ENCODE measurements at regions of chr2 and their contacts with region 1.

Region 1: DNA sequence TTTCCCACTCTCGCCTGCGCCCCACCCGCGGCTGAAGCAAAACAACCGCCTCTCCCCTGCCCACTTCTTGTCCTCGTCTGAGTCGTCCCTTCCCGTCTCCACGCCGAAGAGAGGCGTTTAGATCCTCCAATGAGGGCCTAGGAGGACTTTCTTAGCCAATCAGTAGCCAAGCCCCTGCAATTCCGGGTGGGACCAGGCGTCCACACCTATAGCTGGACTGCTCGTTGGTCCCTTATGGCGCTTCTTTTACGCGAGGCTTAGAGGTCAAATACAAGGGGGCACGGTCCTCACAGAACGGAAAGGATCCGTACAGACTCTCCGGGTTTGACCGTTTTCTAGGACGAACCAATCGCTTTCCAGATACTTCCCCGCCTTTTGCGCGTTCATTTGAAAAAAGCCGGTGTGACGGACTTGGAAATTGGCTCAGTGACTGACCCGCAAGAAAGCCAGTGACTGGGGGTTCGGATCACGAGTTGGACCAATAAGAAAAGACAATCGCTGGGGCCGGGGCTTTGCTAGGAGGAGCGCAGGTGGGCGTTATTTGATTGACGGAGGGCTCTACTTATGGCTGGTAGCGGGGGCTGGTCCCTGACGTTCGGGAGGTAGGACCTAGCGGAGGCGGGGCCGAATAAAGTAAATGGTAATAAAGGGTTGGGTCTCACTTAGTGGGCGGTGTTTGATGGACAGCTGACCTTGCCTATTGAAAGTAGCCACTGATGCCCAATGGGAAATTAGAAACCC is 565 bp upstream of the PPM1B start:
- DNase-seq: peak; percentile 98
- ATAC-seq: peak; percentile 81
- H3K4me3 Mint-ChIP-seq: peak overlapping the region; percentile 94
- H3K27ac Mint-ChIP-seq: peak overlapping the region; percentile 94
- H3K4me1 Mint-ChIP-seq: peaks cover 29% of the 10 kb centered on the region
- H3K27me3 Mint-ChIP-seq: no peaks in the 10 kb centered on the region

Region 2: DNA sequence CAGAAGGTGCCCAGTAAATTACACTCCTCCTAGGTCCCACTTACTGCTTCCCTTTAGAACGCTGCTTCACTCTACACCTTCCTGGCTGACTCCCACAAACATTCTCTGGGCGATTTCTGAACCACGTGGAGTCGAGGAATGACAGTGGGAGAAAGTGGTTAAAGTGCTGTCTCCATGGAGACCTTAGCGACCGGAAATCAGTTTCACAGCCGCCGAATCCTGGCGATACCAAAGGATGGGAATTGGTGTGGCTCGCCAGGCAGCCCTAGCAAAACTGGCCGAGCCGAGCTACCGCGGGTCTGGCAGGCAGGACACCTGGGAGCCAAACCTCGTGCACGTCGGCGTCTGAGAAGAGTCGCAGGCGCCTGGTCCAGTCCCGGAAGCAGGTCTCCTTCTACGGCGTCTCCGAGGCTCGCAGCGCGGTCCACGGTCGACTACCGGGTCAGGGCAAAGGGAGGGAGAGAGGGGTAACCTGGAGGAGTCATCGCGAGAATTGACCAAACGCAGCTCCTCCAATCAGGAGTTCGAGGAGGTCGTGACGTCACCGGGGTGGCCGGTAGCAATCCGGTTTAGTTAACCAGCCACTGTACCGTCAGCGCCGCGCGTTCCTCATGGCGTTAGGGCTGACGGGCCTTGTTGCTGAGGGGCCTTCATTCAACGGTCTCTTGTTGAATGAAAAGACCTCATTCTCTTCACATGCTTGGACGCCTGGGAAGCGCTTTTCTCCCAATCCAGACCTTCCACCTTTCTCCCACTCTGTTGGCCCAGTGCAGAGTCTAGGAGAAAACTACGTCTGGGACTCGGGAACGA is 572.3 kb before region 1 on chr2 and contains the start of gene THADA:
- CTCF ChIA-PET with region 1: no interaction called
- POLR2A ChIA-PET with region 1: interaction called, 3 read pairs
- intact Hi-C with region 1: loop called in 1 of 2 experiments (anchors 1 kb)
- DNase-seq: peak; percentile 99
- ATAC-seq: peak; percentile 97
- H3K4me3 Mint-ChIP-seq: peak within 1 kb of the TSS; percentile 89
- H3K27ac Mint-ChIP-seq: peak within 1 kb of the TSS; percentile 98
- H3K4me1 Mint-ChIP-seq: peaks cover 34% of the 10 kb centered on the region
- H3K27me3 Mint-ChIP-seq: peaks cover 2% of the 10 kb centered on the region
- total RNA-seq, gene THADA: 32.5 to 36.6 TPM

Region 3: GRCh38 chr2:43995733-43996533 is 172.2 kb before region 1 on chr2 and contains the start of gene LRPPRC:
- CTCF ChIA-PET with region 1: no interaction called
- POLR2A ChIA-PET with region 1: interaction called, 3 read pairs
- intact Hi-C with region 1: loop called (anchors 1 to 10 kb)
- DNase-seq: peak; percentile 95
- ATAC-seq: peak; percentile 97
- H3K4me3 Mint-ChIP-seq: peak within 1 kb of the TSS; percentile 81
- H3K27ac Mint-ChIP-seq: peak within 1 kb of the TSS; percentile 92
- H3K4me1 Mint-ChIP-seq: peaks cover 36% of the 10 kb centered on the region
- H3K27me3 Mint-ChIP-seq: no peaks in the 10 kb centered on the region
- total RNA-seq, gene LRPPRC: 189 to 191 TPM

Region 4: GRCh38 chr2:44120428-44120827 is 47.7 kb before region 1 on chr2:
- CTCF ChIA-PET with region 1: interaction called, 3 read pairs
- POLR2A ChIA-PET with region 1: interaction called, 6 read pairs
- intact Hi-C with region 1: loop called (anchors 1 to 5 kb)
- DNase-seq: peak; percentile 38
- ATAC-seq: peak; percentile 78
- H3K4me3 Mint-ChIP-seq: no peak overlapping the region
- H3K27ac Mint-ChIP-seq: no peak overlapping the region
- H3K4me1 Mint-ChIP-seq: peaks cover 36% of the 10 kb centered on the region
- H3K27me3 Mint-ChIP-seq: peaks cover 2% of the 10 kb centered on the region

Region 5: GRCh38 chr2:44616667-44617155 is 448.6 kb after region 1 on chr2:
- CTCF ChIA-PET with region 1: no interaction called
- POLR2A ChIA-PET with region 1: interaction called, 5 read pairs
- intact Hi-C with region 1: loop called in 1 of 2 experiments (anchors 1 kb)
- DNase-seq: no peak
- ATAC-seq: peak; percentile 96
- H3K4me3 Mint-ChIP-seq: no peak overlapping the region
- H3K27ac Mint-ChIP-seq: no peak overlapping the region
- H3K4me1 Mint-ChIP-seq: peaks cover 13% of the 10 kb centered on the region
- H3K27me3 Mint-ChIP-seq: no peaks in the 10 kb centered on the region